ENCODE measurements at regions of chr15 and their contacts with region 1.

Region 1: DNA sequence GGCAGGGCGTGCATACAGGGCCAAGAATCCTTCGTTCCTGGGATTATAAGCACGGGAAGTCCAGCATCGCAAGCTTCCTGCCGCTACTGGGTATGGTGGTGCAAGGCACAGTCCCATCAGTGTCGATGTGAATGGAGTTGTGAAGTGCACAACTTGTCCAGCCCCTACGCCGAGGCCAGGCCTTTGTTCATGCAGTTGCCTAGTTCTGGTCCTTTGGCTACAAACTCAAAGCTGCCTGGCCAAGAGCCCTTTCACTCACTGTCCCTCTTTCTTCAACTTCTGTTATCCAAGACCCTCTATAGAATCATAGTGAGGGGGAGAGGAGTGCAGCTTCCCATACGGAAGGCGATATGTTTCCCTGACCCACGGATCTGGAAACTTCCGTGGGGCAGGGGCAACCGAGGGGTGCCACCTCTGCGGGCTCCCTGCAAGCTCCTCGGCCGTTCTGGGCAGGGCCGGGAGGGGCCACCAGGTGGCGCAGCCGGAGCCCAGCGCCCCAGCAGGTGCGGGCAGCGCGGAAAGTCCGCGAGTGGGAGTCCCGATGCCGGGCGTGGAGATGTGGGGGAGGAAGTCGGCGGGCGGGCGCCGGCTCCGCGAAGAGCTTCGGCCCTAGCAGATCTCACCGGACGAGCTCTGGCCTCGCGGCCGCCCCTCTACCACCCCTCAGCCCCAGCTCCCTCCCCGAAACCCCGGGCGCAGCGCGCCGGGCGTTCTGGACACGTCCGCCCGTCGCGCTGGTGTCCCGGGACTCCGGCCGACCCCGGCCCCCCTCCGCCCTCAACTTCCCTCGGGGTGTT is 693 bp downstream of the RASGRP1 start:
- DNase-seq: peak; percentile 89
- ATAC-seq: peak; percentile 81
- H3K4me3 Mint-ChIP-seq: peak overlapping the region; percentile 94
- H3K27ac Mint-ChIP-seq: peak overlapping the region; percentile 93
- H3K4me1 Mint-ChIP-seq: peaks cover 58% of the 10 kb centered on the region
- H3K27me3 Mint-ChIP-seq: no peaks in the 10 kb centered on the region

Region 2: DNA sequence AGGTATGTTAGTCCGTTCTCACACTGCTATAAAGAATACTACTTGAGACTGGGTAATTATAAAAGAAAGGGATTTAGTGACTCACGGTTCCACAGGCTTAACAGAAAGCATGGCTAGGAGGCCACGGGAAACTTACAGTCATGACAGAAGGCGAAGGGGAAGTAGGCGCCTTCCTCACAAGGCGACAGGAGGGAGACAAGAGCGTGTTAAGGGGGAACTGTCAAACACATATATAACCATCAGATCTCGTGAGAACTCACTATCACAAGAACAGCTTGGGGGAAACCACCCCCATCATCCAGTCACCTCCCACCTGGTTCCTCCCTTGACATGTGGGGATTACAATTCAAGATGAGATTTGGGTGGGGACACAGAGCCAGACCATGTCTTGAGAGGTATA is 280.9 kb before region 1 on chr15:
- CTCF ChIA-PET with region 1: no interaction called
- POLR2A ChIA-PET with region 1: no interaction called
- DNase-seq: no peak
- ATAC-seq: no peak
- H3K4me3 Mint-ChIP-seq: no peak overlapping the region
- H3K27ac Mint-ChIP-seq: no peak overlapping the region
- H3K4me1 Mint-ChIP-seq: no peaks in the 10 kb centered on the region
- H3K27me3 Mint-ChIP-seq: peaks cover 13% of the 10 kb centered on the region

Region 3: GRCh38 chr15:38514601-38515000 is 49.3 kb before region 1 on chr15:
- CTCF ChIA-PET with region 1: interaction called, 11 read pairs
- POLR2A ChIA-PET with region 1: interaction called, 3 read pairs
- DNase-seq: no peak
- ATAC-seq: no peak
- H3K4me3 Mint-ChIP-seq: no peak overlapping the region
- H3K27ac Mint-ChIP-seq: peak overlapping the region; percentile 72
- H3K4me1 Mint-ChIP-seq: peaks cover 20% of the 10 kb centered on the region
- H3K27me3 Mint-ChIP-seq: no peaks in the 10 kb centered on the region

Region 4: GRCh38 chr15:38576837-38577236 is 12.9 kb after region 1 on chr15:
- CTCF ChIA-PET with region 1: interaction called, 11 read pairs
- POLR2A ChIA-PET with region 1: interaction called, 5 read pairs
- DNase-seq: no peak
- ATAC-seq: peak; percentile 23
- H3K4me3 Mint-ChIP-seq: no peak overlapping the region
- H3K27ac Mint-ChIP-seq: peak overlapping the region; percentile 76
- H3K4me1 Mint-ChIP-seq: peaks cover 25% of the 10 kb centered on the region
- H3K27me3 Mint-ChIP-seq: no peaks in the 10 kb centered on the region

Region 5: GRCh38 chr15:38610748-38611147 is 46.8 kb after region 1 on chr15:
- CTCF ChIA-PET with region 1: interaction called, 88 read pairs
- POLR2A ChIA-PET with region 1: interaction called, 71 read pairs
- DNase-seq: peak; percentile 68
- ATAC-seq: peak; percentile 60
- H3K4me3 Mint-ChIP-seq: peak overlapping the region; percentile 71
- H3K27ac Mint-ChIP-seq: peak overlapping the region; percentile 98
- H3K4me1 Mint-ChIP-seq: peaks cover 73% of the 10 kb centered on the region
- H3K27me3 Mint-ChIP-seq: no peaks in the 10 kb centered on the region

Region 6: DNA sequence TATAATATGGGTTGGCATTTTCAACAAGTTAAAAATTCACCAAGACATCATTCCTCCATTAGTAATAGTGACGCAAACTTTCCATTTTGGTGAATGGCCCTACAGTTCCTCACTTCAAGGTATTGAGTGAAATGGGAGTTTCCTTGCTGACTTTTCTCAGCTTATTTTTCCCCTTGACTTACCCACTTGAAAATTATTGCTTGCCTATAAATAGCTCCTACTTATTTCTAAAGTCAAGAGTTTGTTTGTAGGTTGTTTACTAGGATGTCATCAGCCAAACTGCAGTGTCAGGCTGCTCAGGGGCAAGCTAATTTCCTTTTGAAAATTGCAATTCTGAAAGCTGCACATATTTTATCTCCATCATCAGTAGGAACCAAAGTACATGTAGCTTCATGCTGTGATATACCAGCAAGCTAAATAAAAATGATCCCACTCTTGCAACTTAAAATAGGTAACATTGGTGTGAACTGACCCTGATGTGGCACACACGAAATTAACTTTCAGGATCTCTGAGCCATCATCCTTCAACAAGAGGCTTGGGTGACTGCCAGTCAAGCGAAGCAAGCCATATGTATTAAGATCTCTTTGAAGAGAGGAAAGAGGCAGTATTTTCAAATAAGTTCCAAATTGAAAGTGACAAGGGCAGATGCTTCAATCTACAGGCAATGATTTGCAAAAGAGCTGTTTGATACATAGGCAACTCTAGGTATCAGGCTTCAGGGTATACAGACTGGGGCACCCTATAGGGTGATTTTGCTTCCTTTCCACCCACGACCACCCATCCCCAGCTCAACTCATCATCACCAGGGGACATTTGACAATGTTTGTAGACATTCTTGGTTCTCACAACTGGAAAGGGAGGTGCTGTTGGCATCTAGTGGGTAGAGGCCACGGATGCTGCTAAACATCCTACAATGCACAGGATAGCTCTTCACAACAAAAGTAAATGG is 67.5 kb after region 1 on chr15:
- CTCF ChIA-PET with region 1: interaction called, 31 read pairs
- POLR2A ChIA-PET with region 1: interaction called, 10 read pairs
- DNase-seq: no peak
- ATAC-seq: no peak
- H3K4me3 Mint-ChIP-seq: no peak overlapping the region
- H3K27ac Mint-ChIP-seq: peak overlapping the region; percentile 51
- H3K4me1 Mint-ChIP-seq: peaks cover 32% of the 10 kb centered on the region
- H3K27me3 Mint-ChIP-seq: no peaks in the 10 kb centered on the region

Region 7: GRCh38 chr15:38660738-38661137 is 96.8 kb after region 1 on chr15:
- CTCF ChIA-PET with region 1: interaction called, 218 read pairs
- POLR2A ChIA-PET with region 1: interaction called, 13 read pairs
- DNase-seq: peak; percentile 39
- ATAC-seq: peak; percentile 54
- H3K4me3 Mint-ChIP-seq: no peak overlapping the region
- H3K27ac Mint-ChIP-seq: peak overlapping the region; percentile 60
- H3K4me1 Mint-ChIP-seq: peaks cover 75% of the 10 kb centered on the region
- H3K27me3 Mint-ChIP-seq: no peaks in the 10 kb centered on the region

Measured in activated CD8-positive, alpha-beta T cell treated with anti-CD3 and anti-CD28 coated beads, Interleukin-2, amount 10 ng/mL, durations not matched to agents 7 days and 5 days (primary cell).